Adrenal gland (tissue), 19 donors: ENCODE measurements at regions of chr2 and their contacts with region 1.

Region 1: GRCh38 chr2:241324775-241325174 is 9.1 kb downstream of the SEPTIN2 start:
- DNase-seq: no peak
- H3K4me3 ChIP-seq: no peak overlapping the region
- H3K27ac ChIP-seq: no peak overlapping the region
- H3K4me1 ChIP-seq: peaks cover 24 to 52% of the 10 kb centered on the region in 2 donors
- H3K27me3 ChIP-seq: no peaks in the 10 kb centered on the region
- CTCF ChIP-seq: no peak
- POLR2A ChIP-seq: no peak

Region 2: GRCh38 chr2:240250985-240251847 is 1073.6 kb before region 1 on chr2:
- intact Hi-C with region 1: no loop called
- DNase-seq: peak; percentile 92 to 99 (median 98)
- H3K4me3 ChIP-seq: no peak overlapping the region
- H3K27ac ChIP-seq: peak overlapping the region; percentile 89 to 99 (median 91)
- H3K4me1 ChIP-seq: peaks cover 21 to 35% of the 10 kb centered on the region in 2 donors
- H3K27me3 ChIP-seq: no peaks in the 10 kb centered on the region
- CTCF ChIP-seq: no peak
- POLR2A ChIP-seq: peak in 1 of 2 donors; percentile 83

Region 3: GRCh38 chr2:241188361-241189050 is 136.3 kb before region 1 on chr2 and contains the start of gene ANO7:
- intact Hi-C with region 1: no loop called
- DNase-seq: no peak
- H3K4me3 ChIP-seq: no peak within 1 kb of the TSS
- H3K27ac ChIP-seq: no peak within 1 kb of the TSS
- H3K4me1 ChIP-seq: no peaks in the 10 kb centered on the region
- H3K27me3 ChIP-seq: no peaks in the 10 kb centered on the region
- CTCF ChIP-seq: no peak
- POLR2A ChIP-seq: no peak
- total RNA-seq, gene ANO7: 1.1 to 5.1 (median 1.9) TPM

Region 4: DNA sequence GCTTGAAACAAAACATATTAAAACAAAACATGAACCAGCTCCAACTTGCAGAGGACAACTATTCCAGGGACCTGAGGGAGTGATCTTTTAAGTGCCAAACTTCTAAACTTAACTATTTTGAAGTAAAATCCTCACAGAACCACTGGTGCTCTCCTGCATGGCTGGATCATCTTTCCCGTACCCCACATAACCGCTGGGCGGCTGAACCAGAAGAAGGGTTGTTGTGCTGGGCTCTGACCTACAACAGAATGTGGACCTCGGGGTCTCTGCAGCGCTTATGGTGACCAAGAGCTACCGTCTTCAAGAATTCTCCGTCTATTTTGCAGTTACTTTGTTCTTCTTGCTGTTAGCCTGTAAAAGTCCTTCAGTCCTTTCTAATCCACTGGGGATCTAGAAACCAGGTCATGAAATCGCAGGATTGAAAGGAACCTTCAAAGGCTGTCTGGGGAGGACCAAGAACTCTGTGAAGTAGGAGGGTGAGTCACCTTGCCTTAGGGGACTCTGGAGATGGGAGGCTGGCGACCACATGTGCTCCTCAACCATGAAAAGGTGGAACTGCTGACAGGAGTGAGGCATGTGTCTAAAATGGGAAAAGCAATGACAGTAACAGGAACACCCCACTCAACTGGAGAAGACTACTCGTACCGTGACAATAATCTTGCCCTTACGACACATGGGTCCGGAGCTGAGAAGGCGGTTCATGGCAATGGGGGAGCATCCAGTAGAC is 55.9 kb before region 1 on chr2:
- intact Hi-C with region 1: loop called in 1 of 2 experiments (anchors 10 kb)
- DNase-seq: peak in 1 of 7 donors; percentile 51
- H3K4me3 ChIP-seq: no peak overlapping the region
- H3K27ac ChIP-seq: peak overlapping the region in 1 of 5 donors; percentile 18
- H3K4me1 ChIP-seq: peaks cover 30 to 45% of the 10 kb centered on the region in 2 donors
- H3K27me3 ChIP-seq: no peaks in the 10 kb centered on the region
- CTCF ChIP-seq: no peak
- POLR2A ChIP-seq: no peak